ENCODE measurements at regions of chr19 and their contacts with region 1.

Region 1: GRCh38 chr19:1249298-1249989 is 1.1 kb downstream of the MIDN start:
- DNase-seq: peak; percentile 91
- H3K4me3 Mint-ChIP-seq: peak overlapping the region; percentile 82
- H3K27ac Mint-ChIP-seq: peak overlapping the region; percentile 86
- H3K4me1 Mint-ChIP-seq: peaks cover 5% of the 10 kb centered on the region
- H3K27me3 Mint-ChIP-seq: no peaks in the 10 kb centered on the region

Region 2: GRCh38 chr19:1260636-1261537 is 11.4 kb after region 1 on chr19:
- intact Hi-C with region 1: loop called (anchors 1 kb)
- DNase-seq: peak; percentile 98
- H3K4me3 Mint-ChIP-seq: peak overlapping the region; percentile 87
- H3K27ac Mint-ChIP-seq: peak overlapping the region; percentile 93
- H3K4me1 Mint-ChIP-seq: peaks cover 41% of the 10 kb centered on the region
- H3K27me3 Mint-ChIP-seq: no peaks in the 10 kb centered on the region